AG04449 (cell line): ENCODE measurements at regions of chr13 and their contacts with region 1.

Region 1: DNA sequence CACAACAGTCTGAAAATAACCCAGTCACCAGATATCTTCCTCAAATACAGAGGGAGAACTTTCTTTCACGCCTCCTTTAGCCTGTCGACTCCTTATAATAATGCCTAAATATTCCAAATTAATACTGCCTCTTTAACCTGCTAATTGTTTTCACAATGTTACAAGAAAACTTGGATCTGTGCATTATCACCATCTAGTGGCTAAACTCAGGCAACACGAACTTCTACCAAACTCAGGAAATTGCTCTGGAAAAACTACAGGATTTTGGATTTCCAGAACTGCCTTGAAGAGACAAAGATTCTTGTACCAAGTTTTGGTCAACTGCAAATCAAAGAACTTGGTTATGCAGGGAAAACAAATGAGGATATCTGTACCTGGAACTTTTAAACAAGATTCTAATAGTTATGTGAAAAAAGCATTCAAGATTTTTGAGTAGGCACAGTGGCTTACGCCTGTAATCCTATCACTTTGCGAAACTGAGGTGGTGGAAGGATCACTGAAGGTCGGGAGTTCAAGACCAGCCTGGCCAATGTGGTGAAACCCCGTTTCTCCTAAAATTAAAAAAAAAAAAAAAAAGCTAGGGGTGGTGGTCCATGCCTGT is 10.8 kb downstream of the CLN5 start:
- DNase-seq: no peak
- H3K4me3 ChIP-seq: no peak overlapping the region
- CTCF ChIP-seq: peak; percentile 56

Region 2: GRCh38 chr13:76991796-76992547 is 10.7 kb before region 1 on chr13 and contains the start of gene CLN5:
- CTCF ChIA-PET with region 1: interaction called, 41 read pairs
- POLR2A ChIA-PET with region 1: interaction called, 3 read pairs
- DNase-seq: peak; percentile 52
- H3K4me3 ChIP-seq: peak within 1 kb of the TSS; percentile 89
- CTCF ChIP-seq: no peak

Region 3: DNA sequence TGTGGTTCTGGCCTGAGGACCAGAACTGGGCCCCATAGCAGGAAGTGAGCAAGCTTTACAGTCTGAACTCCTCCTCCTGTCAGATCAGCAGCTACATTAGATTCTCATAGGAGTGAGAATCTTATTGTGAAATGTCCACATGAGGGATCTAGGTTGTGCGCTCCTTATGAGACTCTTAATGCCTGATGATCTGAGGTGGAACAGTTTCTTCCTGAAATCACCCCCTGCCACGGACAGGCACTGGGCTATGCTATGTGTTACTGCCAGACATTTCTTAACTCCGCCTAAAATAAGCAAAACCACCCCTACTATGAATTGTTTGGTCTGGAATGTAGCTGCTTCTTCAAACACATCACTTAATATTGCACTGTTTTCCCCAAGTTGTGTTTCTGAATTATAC is 19.7 kb after region 1 on chr13:
- CTCF ChIA-PET with region 1: interaction called, 88 read pairs
- POLR2A ChIA-PET with region 1: no interaction called
- DNase-seq: no peak
- H3K4me3 ChIP-seq: no peak overlapping the region
- CTCF ChIP-seq: no peak